ENCODE measurements at regions of chr5 and their contacts with region 1.

Region 1: GRCh38 chr5:87780831-87781760 is 368.4 kb upstream of the CCNH start:
- DNase-seq: peak; percentile 83
- H3K4me3 ChIP-seq: no peak overlapping the region
- H3K27ac ChIP-seq: no peak overlapping the region
- H3K4me1 ChIP-seq: no peaks in the 10 kb centered on the region
- CTCF ChIP-seq: peak; percentile 95

Region 2: DNA sequence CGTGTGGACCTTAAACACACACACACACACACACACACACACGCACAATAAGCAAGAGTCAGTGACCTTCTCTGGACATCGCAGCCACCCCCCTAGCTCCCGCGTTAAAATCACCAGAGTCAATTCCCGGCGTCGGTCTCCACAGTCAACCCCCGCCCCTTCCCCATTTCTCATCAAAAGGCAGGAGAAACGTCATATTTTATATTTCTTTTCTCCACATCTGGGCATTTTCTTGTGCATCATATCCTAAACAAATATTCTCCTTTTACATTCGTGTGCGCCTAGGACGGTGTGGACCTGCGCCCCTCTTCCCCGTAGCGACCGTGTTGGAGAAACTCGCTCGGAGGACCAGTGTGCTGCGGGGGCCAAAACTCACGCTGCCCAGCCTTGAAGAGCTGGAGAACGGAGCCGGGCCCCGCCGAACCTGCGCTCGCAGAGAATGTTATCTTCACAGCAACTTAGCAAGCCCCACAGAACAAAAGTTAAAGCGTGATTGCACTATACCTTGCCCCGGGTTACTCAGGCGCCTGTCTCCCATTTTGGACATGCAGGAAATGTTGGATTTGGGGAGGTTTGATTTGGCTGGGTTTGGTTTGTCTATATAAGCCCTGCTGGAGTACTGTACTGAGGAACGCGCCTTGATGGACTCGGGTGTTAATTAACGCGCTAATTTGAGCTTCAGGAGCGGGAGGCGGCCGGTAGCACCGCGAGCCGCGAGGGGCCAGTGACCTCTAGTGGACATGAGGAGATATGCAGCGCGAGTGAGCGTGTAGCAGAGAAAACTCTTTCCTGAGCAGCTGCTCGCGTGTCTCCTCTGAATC is 909.5 kb after region 1 on chr5:
- CTCF ChIA-PET with region 1: interaction called, 4 read pairs
- POLR2A ChIA-PET with region 1: no interaction called
- intact Hi-C with region 1: loop called (anchors 1 kb)
- DNase-seq: peak; percentile 72
- H3K4me3 ChIP-seq: no peak overlapping the region
- H3K27ac ChIP-seq: no peak overlapping the region
- H3K4me1 ChIP-seq: no peaks in the 10 kb centered on the region
- CTCF ChIP-seq: peak; percentile 94